PC-3 (cell line): ENCODE measurements at regions of chr2 and their contacts with region 1.

Region 1: DNA sequence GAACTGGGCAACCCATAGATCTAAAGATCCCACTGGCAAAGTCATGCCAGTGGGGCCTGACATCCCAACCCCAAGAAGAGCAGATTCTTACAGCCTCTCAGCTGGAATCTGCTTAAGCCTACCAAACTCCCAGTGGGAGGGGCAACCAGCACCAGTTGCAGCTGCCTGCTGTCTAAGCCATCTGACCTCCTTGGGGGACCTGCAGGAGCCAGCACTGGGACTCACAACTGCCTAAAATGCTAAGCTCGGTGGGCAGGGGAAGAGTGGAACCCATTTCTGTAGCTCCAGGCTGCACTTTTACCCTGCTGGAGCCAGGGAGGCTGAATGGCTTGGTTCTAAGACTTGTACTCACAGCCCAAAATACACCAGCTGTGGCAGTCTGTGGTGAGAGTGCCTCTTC is 770.7 kb upstream of the SLC8A1 start:
- DNase-seq: no peak
- ATAC-seq: no peak
- H3K4me3 ChIP-seq: no peak overlapping the region
- H3K27ac ChIP-seq: no peak overlapping the region
- H3K4me1 ChIP-seq: no peaks in the 10 kb centered on the region
- H3K27me3 ChIP-seq: no peaks in the 10 kb centered on the region
- CTCF ChIP-seq: no peak

Region 2: GRCh38 chr2:41364842-41365241 is 142.2 kb after region 1 on chr2:
- CTCF ChIA-PET with region 1: no interaction called
- POLR2A ChIA-PET with region 1: interaction called, 11 read pairs
- intact Hi-C with region 1: no loop called
- DNase-seq: no peak
- ATAC-seq: no peak
- H3K4me3 ChIP-seq: no peak overlapping the region
- H3K27ac ChIP-seq: no peak overlapping the region
- H3K4me1 ChIP-seq: no peaks in the 10 kb centered on the region
- H3K27me3 ChIP-seq: no peaks in the 10 kb centered on the region
- CTCF ChIP-seq: no peak